Naive thymus-derived CD4-positive, alpha-beta T cell (primary cell): ENCODE measurements at regions of chr18 and their contacts with region 1.

Region 1: GRCh38 chr18:79988451-79989194 is at the start of gene TXNL4A:
- DNase-seq: peak; percentile 76 to 88 (median 84)
- ATAC-seq: peak; percentile 97
- H3K4me3 ChIP-seq: peak within 1 kb of the TSS; percentile 94
- H3K4me3 Mint-ChIP-seq: peak within 1 kb of the TSS; percentile 80 to 97 (median 92)
- H3K27ac ChIP-seq: peak within 1 kb of the TSS; percentile 93
- H3K27ac Mint-ChIP-seq: peak within 1 kb of the TSS; percentile 85 to 98 (median 95)
- H3K4me1 ChIP-seq: peaks cover 20 to 27% of the 10 kb centered on the region in 2 donors
- H3K4me1 Mint-ChIP-seq: peaks cover 30 to 45% (median 38%) of the 10 kb centered on the region in 7 donors
- H3K27me3 ChIP-seq: no peaks in the 10 kb centered on the region
- H3K27me3 Mint-ChIP-seq: peaks cover 0 to 5% (median 0%) of the 10 kb centered on the region in 5 donors
- total RNA-seq, gene TXNL4A: 56.9 to 107 (median 69.7) TPM

Region 2: GRCh38 chr18:79068937-79069791 is 919.5 kb before region 1 on chr18 and contains the start of gene ATP9B:
- CTCF ChIA-PET with region 1: no interaction called
- POLR2A ChIA-PET with region 1: no interaction called
- intact Hi-C with region 1: loop called in 1 of 2 experiments (anchors 2 kb)
- DNase-seq: peak; percentile 97 to 100 (median 99)
- ATAC-seq: peak; percentile 91
- H3K4me3 ChIP-seq: peak within 1 kb of the TSS; percentile 59
- H3K4me3 Mint-ChIP-seq: peak within 1 kb of the TSS; percentile 85 to 98 (median 94)
- H3K27ac ChIP-seq: peak within 1 kb of the TSS; percentile 98
- H3K27ac Mint-ChIP-seq: peak within 1 kb of the TSS; percentile 98 to 100 (median 99)
- H3K4me1 ChIP-seq: peaks cover 12 to 29% of the 10 kb centered on the region in 2 donors
- H3K4me1 Mint-ChIP-seq: peaks cover 28 to 63% (median 51%) of the 10 kb centered on the region in 7 donors
- H3K27me3 ChIP-seq: no peaks in the 10 kb centered on the region
- H3K27me3 Mint-ChIP-seq: peaks cover under 1 to 21% (median 5%) of the 10 kb centered on the region in 5 donors
- total RNA-seq, gene ATP9B: 36.1 to 90.5 (median 90.0) TPM

Region 3: GRCh38 chr18:79400091-79400590 is 588.5 kb before region 1 on chr18:
- CTCF ChIA-PET with region 1: no interaction called
- POLR2A ChIA-PET with region 1: no interaction called
- intact Hi-C with region 1: loop called in 1 of 2 experiments (anchors 10 kb)
- DNase-seq: peak in 8 of 9 donors; percentile 38 to 65 (median 52)
- ATAC-seq: peak; percentile 45
- H3K4me3 ChIP-seq: peak overlapping the region; percentile 52
- H3K4me3 Mint-ChIP-seq: peak overlapping the region in 2 of 10 donors; percentile 90 to 91
- H3K27ac ChIP-seq: peak overlapping the region; percentile 95
- H3K27ac Mint-ChIP-seq: no peak overlapping the region
- H3K4me1 ChIP-seq: peaks cover 22 to 43% of the 10 kb centered on the region in 2 donors
- H3K4me1 Mint-ChIP-seq: peaks cover 31 to 64% (median 52%) of the 10 kb centered on the region in 7 donors
- H3K27me3 ChIP-seq: no peaks in the 10 kb centered on the region
- H3K27me3 Mint-ChIP-seq: no peaks in the 10 kb centered on the region

Region 4: GRCh38 chr18:79588636-79589481 is 399.8 kb before region 1 on chr18:
- CTCF ChIA-PET with region 1: no interaction called
- POLR2A ChIA-PET with region 1: no interaction called
- intact Hi-C with region 1: no loop called
- DNase-seq: no peak
- ATAC-seq: no peak
- H3K4me3 ChIP-seq: no peak overlapping the region
- H3K4me3 Mint-ChIP-seq: no peak overlapping the region
- H3K27ac ChIP-seq: no peak overlapping the region
- H3K27ac Mint-ChIP-seq: no peak overlapping the region
- H3K4me1 ChIP-seq: no peaks in the 10 kb centered on the region
- H3K4me1 Mint-ChIP-seq: peaks cover 0 to 5% (median 0%) of the 10 kb centered on the region in 7 donors
- H3K27me3 ChIP-seq: no peaks in the 10 kb centered on the region
- H3K27me3 Mint-ChIP-seq: peaks cover 0 to 16% (median 0%) of the 10 kb centered on the region in 5 donors

Region 5: GRCh38 chr18:79790996-79791972 is 197.3 kb before region 1 on chr18:
- CTCF ChIA-PET with region 1: no interaction called
- POLR2A ChIA-PET with region 1: no interaction called
- intact Hi-C with region 1: loop called in 1 of 2 experiments (anchors 10 kb)
- DNase-seq: no peak
- ATAC-seq: peak; percentile 72
- H3K4me3 ChIP-seq: no peak overlapping the region
- H3K4me3 Mint-ChIP-seq: peak overlapping the region in 4 of 10 donors; percentile 11 to 45 (median 30)
- H3K27ac ChIP-seq: no peak overlapping the region
- H3K27ac Mint-ChIP-seq: no peak overlapping the region
- H3K4me1 ChIP-seq: no peaks in the 10 kb centered on the region
- H3K4me1 Mint-ChIP-seq: peaks cover 5 to 28% (median 8%) of the 10 kb centered on the region in 7 donors
- H3K27me3 ChIP-seq: peaks cover 0 to 3% of the 10 kb centered on the region in 2 donors
- H3K27me3 Mint-ChIP-seq: peaks cover 58 to 74% (median 67%) of the 10 kb centered on the region in 5 donors

Region 6: DNA sequence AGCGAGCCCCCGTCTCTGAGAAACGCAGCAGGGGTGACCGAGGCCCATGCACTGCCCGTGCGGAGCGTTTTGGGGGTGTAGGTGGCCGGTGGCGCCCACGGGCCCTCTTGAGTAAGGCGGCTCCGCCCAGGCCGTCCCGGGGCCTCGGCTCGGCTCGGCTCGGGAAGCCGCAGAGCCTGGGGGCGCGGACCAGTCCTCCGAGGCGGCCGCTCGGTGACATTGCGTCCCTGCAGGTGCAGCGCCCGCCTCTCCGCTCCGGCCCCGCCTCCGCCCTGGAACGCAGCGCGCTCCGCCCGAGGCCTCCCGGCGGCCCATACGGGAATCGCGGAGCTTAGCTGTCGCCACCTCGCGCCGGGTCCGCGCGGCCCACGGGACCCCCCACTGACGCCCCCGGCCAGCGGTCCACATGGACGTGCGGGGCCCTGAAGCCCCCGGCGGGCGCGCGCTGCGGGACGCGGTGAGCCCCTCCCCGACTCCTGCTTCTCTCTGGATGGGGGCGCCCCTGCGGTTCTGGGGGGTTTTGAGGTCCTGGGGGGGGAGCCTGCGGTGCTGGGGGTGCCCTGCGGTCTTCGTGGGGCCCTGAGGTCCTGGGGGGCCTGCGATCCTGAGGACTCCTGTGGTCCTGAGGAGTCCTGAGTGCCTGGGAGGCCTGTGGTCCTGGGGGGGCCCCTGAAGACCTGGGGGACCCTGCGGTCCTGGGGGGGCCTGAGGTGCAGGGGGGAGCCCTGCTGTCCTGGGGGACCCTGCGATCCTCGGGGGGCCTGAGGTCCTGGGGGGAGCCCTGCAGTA is 24.1 kb before region 1 on chr18 and contains the start of gene HSBP1L1:
- CTCF ChIA-PET with region 1: interaction called, 7 read pairs
- POLR2A ChIA-PET with region 1: interaction called, 19 read pairs
- intact Hi-C with region 1: loop called (anchors 1 kb)
- DNase-seq: peak; percentile 60 to 75 (median 69)
- ATAC-seq: peak; percentile 89
- H3K4me3 ChIP-seq: peak within 1 kb of the TSS; percentile 22
- H3K4me3 Mint-ChIP-seq: peak within 1 kb of the TSS; percentile 81 to 93 (median 90)
- H3K27ac ChIP-seq: peak within 1 kb of the TSS; percentile 89
- H3K27ac Mint-ChIP-seq: peak within 1 kb of the TSS; percentile 88 to 96 (median 94)
- H3K4me1 ChIP-seq: peaks cover 14 to 19% of the 10 kb centered on the region in 2 donors
- H3K4me1 Mint-ChIP-seq: peaks cover 9 to 47% (median 20%) of the 10 kb centered on the region in 7 donors
- H3K27me3 ChIP-seq: no peaks in the 10 kb centered on the region
- H3K27me3 Mint-ChIP-seq: no peaks in the 10 kb centered on the region
- total RNA-seq, gene HSBP1L1: 13.7 to 44.9 (median 41.7) TPM

Region 7: DNA sequence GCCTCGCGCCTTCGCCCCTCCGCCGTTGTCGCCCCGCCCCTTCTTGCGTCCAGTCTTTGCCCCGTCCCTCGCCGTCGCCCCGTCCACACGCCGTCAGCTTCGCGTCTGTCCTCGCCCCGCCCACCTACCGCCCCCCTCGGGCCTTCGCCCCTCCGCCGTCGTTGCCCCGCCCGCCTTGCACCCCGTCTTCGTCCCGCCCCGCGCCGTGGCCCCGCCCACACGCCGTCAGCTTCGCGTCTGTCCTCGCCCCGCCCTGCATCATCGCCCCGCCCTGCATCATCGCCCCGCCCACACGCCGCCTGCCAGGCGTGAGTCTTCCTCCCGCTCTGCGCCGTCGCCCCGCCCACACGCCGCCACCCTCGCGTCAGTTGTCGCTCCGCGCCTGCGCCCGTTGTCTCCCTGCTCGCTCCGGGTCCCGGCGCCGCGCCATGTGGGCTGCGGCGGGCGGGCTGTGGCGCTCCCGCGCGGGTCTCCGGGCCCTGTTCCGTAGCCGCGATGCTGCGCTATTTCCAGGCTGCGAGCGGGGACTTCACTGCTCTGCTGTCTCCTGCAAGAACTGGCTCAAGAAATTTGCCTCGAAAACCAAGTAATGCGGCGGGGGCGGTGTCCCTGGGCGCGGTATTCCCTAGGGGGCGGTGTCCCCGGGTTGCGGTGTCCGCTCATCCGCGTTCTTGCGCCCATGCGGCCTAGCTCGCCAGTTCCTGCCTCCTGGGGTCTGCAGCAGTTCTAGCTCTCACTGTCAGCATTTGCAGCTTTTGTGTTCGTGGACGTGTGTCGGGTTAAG is 45.6 kb after region 1 on chr18 and contains the start of gene RBFA:
- CTCF ChIA-PET with region 1: no interaction called
- POLR2A ChIA-PET with region 1: interaction called, 4 read pairs
- intact Hi-C with region 1: loop called (anchors 1 kb)
- DNase-seq: peak; percentile 95 to 100 (median 98)
- ATAC-seq: peak; percentile 88
- H3K4me3 ChIP-seq: peak within 1 kb of the TSS; percentile 83
- H3K4me3 Mint-ChIP-seq: peak within 1 kb of the TSS; percentile 84 to 95 (median 91)
- H3K27ac ChIP-seq: peak within 1 kb of the TSS; percentile 87
- H3K27ac Mint-ChIP-seq: peak within 1 kb of the TSS; percentile 86 to 99 (median 96)
- H3K4me1 ChIP-seq: peaks cover 8 to 14% of the 10 kb centered on the region in 2 donors
- H3K4me1 Mint-ChIP-seq: peaks cover 22 to 36% (median 29%) of the 10 kb centered on the region in 7 donors
- H3K27me3 ChIP-seq: no peaks in the 10 kb centered on the region
- H3K27me3 Mint-ChIP-seq: no peaks in the 10 kb centered on the region
- total RNA-seq, gene RBFA: 17.6 to 23.5 (median 21.7) TPM

Region 8: DNA sequence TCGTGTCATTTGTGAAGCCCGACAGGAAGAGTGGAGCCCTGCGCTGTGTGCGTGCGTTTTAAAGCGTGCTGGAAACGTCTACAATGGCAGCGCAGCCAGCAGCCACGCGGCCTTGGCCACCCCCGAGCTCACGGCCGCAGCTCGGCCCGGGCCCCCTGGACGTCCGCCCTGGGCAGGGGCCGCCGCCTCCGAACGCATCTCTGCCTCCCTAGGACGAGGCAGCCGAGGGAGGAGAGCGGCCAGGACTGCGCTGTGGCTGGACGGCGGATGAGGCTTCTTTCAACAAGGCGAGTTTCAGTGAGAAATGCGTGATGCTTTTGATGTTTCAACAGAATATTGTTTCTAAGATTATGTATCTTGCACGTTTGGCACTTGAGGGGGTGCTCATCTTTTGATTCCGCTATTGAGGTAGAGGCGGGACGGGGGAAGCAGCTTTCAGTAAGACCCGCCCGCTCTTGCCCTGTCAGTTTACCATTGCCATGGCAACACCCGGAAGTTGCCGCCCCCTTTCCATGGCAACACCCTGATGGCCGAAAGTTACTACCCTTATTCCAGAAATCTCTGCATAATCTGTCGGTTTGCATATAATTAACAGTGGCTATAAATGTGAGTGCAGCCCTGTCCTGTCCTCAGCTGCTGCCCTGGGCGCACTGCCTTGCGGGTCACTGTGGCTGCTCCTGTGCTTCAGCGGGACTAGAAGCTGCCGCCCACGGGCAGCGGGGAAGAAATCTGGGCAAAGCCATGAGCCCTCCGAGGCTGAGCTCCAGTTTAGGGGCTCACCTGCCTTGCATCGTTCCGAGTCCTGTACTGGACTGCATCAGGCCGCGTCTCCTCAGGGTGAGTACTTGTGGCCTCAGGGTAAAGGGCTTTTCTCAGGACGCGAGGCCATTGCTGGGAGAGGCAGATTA is 159.0 kb after region 1 on chr18:
- CTCF ChIA-PET with region 1: no interaction called
- POLR2A ChIA-PET with region 1: no interaction called
- intact Hi-C with region 1: loop called in 1 of 2 experiments (anchors 1 kb)
- DNase-seq: peak; percentile 41 to 79 (median 62)
- ATAC-seq: peak; percentile 89
- H3K4me3 ChIP-seq: peak overlapping the region; percentile 55
- H3K4me3 Mint-ChIP-seq: peak overlapping the region; percentile 78 to 91 (median 86)
- H3K27ac ChIP-seq: no peak overlapping the region
- H3K27ac Mint-ChIP-seq: peak overlapping the region in 7 of 9 donors; percentile 18 to 78 (median 55)
- H3K4me1 ChIP-seq: peaks cover 7 to 9% of the 10 kb centered on the region in 2 donors
- H3K4me1 Mint-ChIP-seq: peaks cover 0 to 26% (median 17%) of the 10 kb centered on the region in 7 donors
- H3K27me3 ChIP-seq: peaks cover 0 to 2% of the 10 kb centered on the region in 2 donors
- H3K27me3 Mint-ChIP-seq: peaks cover 0 to 27% (median 10%) of the 10 kb centered on the region in 5 donors